ENCODE measurements at regions of chr4 and their contacts with region 1.

Region 1: DNA sequence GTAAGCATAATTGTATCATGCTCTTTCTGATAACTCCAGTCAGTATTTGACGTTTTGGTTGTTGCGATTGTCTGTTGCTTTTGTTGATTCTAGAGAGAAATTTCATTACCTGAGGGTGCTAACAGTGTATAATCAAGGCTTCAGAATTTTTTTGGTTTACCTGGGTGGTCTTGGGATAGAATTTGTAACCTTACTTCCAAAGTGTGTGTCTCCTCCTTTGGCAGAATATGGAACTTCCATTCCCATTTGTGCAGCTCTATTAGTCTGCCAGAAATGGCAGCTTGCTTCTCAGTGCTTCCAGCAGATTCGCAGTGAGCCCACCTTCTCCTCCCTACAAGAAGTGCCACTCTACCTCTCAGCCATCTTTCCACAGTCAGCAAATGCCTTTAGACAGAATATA is 5.3 kb downstream of the COPS4 start:
- DNase-seq: no peak
- ATAC-seq: no peak
- H3K4me3 ChIP-seq: no peak overlapping the region
- H3K27ac ChIP-seq: no peak overlapping the region
- H3K4me1 ChIP-seq: peaks cover 16% of the 10 kb centered on the region
- H3K27me3 ChIP-seq: no peaks in the 10 kb centered on the region
- CTCF ChIP-seq: no peak

Region 2: GRCh38 chr4:83093130-83093529 is 52.9 kb after region 1 on chr4:
- CTCF ChIA-PET with region 1: no interaction called
- POLR2A ChIA-PET with region 1: no interaction called
- in situ Hi-C with region 1: no loop called
- intact Hi-C with region 1: no loop called
- DNase-seq: no peak
- ATAC-seq: no peak
- H3K4me3 ChIP-seq: no peak overlapping the region
- H3K27ac ChIP-seq: no peak overlapping the region
- H3K4me1 ChIP-seq: peaks cover 5% of the 10 kb centered on the region
- H3K27me3 ChIP-seq: no peaks in the 10 kb centered on the region
- CTCF ChIP-seq: no peak

Region 3: DNA sequence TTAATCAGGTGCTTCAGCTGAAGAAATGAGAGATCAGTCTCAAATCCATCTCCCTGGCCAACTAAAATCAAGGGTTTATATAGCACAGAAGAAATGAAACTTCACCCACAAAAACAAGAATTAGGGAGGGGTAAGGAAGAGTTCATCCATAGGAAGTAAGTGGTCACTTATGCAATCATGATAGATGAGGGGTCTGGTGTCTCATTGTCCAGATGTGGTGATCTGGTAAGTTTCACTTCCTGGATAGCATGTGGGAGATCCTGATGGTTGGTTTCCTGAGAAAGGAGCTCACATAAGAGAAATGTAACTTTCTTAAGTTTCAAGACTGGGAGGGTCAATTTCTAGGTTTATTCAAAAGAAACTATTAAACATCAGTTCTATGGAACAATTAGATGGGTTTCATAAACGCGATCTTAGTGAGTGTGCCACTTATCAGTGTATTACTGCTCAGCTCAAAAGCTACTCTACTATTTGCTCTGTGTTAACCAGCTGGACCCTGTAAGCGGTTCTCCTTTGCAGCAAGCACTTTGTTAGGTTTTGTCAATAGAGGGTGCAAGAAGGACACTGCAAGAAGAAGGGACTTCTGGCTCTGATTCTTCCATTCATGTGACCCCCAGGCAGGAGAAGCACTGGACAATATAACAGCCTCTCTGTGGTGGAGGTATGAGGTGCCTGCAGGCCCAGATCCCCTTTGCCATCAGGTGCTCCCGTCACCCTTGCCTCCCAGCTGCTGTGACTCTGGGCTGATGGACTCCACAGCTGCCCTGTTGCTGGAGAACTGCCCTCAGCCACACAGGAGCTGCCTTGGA is 329.8 kb after region 1 on chr4:
- CTCF ChIA-PET with region 1: no interaction called
- POLR2A ChIA-PET with region 1: no interaction called
- in situ Hi-C with region 1: no loop called
- intact Hi-C with region 1: no loop called
- DNase-seq: no peak
- ATAC-seq: no peak
- H3K4me3 ChIP-seq: no peak overlapping the region
- H3K27ac ChIP-seq: no peak overlapping the region
- H3K4me1 ChIP-seq: no peaks in the 10 kb centered on the region
- H3K27me3 ChIP-seq: no peaks in the 10 kb centered on the region
- CTCF ChIP-seq: no peak

Region 4: GRCh38 chr4:83405844-83406816 is 365.9 kb after region 1 on chr4:
- CTCF ChIA-PET with region 1: no interaction called
- POLR2A ChIA-PET with region 1: interaction called, 13 read pairs
- in situ Hi-C with region 1: no loop called
- intact Hi-C with region 1: no loop called
- DNase-seq: no peak
- ATAC-seq: no peak
- H3K4me3 ChIP-seq: no peak overlapping the region
- H3K27ac ChIP-seq: no peak overlapping the region
- H3K4me1 ChIP-seq: no peaks in the 10 kb centered on the region
- H3K27me3 ChIP-seq: no peaks in the 10 kb centered on the region
- CTCF ChIP-seq: no peak

Measured in Panc1 (cell line).